ENCODE measurements at regions of chr11 and their contacts with region 1.

Region 1: GRCh38 chr11:125111343-125112207 is at the start of gene TMEM218:
- H3K4me3 Mint-ChIP-seq: peak within 1 kb of the TSS; percentile 96
- H3K27ac Mint-ChIP-seq: peak within 1 kb of the TSS; percentile 95
- H3K4me1 Mint-ChIP-seq: peaks cover 12% of the 10 kb centered on the region
- H3K27me3 Mint-ChIP-seq: no peaks in the 10 kb centered on the region

Region 2: GRCh38 chr11:124622531-124623451 is 488.8 kb before region 1 on chr11 and contains the start of gene TBRG1:
- intact Hi-C with region 1: loop called (anchors 5 kb)
- H3K4me3 Mint-ChIP-seq: peak within 1 kb of the TSS; percentile 94
- H3K27ac Mint-ChIP-seq: peak within 1 kb of the TSS; percentile 97
- H3K4me1 Mint-ChIP-seq: peaks cover 35% of the 10 kb centered on the region
- H3K27me3 Mint-ChIP-seq: peaks cover 11% of the 10 kb centered on the region

Region 3: GRCh38 chr11:124953753-124954589 is 157.6 kb before region 1 on chr11 and contains the start of gene CCDC15:
- intact Hi-C with region 1: loop called (anchors 5 kb)
- H3K4me3 Mint-ChIP-seq: no peak within 1 kb of the TSS
- H3K27ac Mint-ChIP-seq: no peak within 1 kb of the TSS
- H3K4me1 Mint-ChIP-seq: no peaks in the 10 kb centered on the region
- H3K27me3 Mint-ChIP-seq: peaks cover 2% of the 10 kb centered on the region

Region 4: GRCh38 chr11:125062931-125063428 is 48.6 kb before region 1 on chr11 and contains the start of gene SLC37A2:
- intact Hi-C with region 1: loop called (anchors 2 kb)
- H3K4me3 Mint-ChIP-seq: peak within 1 kb of the TSS; percentile 87
- H3K27ac Mint-ChIP-seq: peak within 1 kb of the TSS; percentile 96
- H3K4me1 Mint-ChIP-seq: peaks cover 37% of the 10 kb centered on the region
- H3K27me3 Mint-ChIP-seq: no peaks in the 10 kb centered on the region

Region 5: GRCh38 chr11:125070699-125071254 is 40.8 kb before region 1 on chr11:
- intact Hi-C with region 1: loop called (anchors 2 kb)
- H3K4me3 Mint-ChIP-seq: peak overlapping the region; percentile 42
- H3K27ac Mint-ChIP-seq: peak overlapping the region; percentile 96
- H3K4me1 Mint-ChIP-seq: peaks cover 88% of the 10 kb centered on the region
- H3K27me3 Mint-ChIP-seq: no peaks in the 10 kb centered on the region

Region 6: GRCh38 chr11:125123947-125124617 is 12.5 kb after region 1 on chr11:
- intact Hi-C with region 1: loop called (anchors 1 kb)
- H3K4me3 Mint-ChIP-seq: peak overlapping the region; percentile 58
- H3K27ac Mint-ChIP-seq: peak overlapping the region; percentile 89
- H3K4me1 Mint-ChIP-seq: peaks cover 21% of the 10 kb centered on the region
- H3K27me3 Mint-ChIP-seq: peaks cover 18% of the 10 kb centered on the region

Measured in dendritic cell treated with granulocyte-macrophage colony-stimulating factor and Interleukin-4, amounts not matched to agents 40 ng/mL and 50 ng/mL, for 4 days (primary cell).